Calu3 (cell line): ENCODE measurements at regions of chr5 and their contacts with region 1.

Region 1: GRCh38 chr5:127875235-127876021 is 172.2 kb downstream of the CCDC192 start:
- DNase-seq: peak; percentile 84
- H3K4me3 Mint-ChIP-seq: no peak overlapping the region
- H3K27ac Mint-ChIP-seq: no peak overlapping the region
- H3K4me1 Mint-ChIP-seq: peaks cover 18% of the 10 kb centered on the region
- H3K27me3 Mint-ChIP-seq: no peaks in the 10 kb centered on the region
- CTCF ChIP-seq: peak; percentile 42

Region 2: GRCh38 chr5:127564002-127564769 is 311.2 kb before region 1 on chr5:
- CTCF ChIA-PET with region 1: interaction called, 4 read pairs
- intact Hi-C with region 1: loop called (anchors 5 kb)
- DNase-seq: peak; percentile 73
- H3K4me3 Mint-ChIP-seq: no peak overlapping the region
- H3K27ac Mint-ChIP-seq: no peak overlapping the region
- H3K4me1 Mint-ChIP-seq: peaks cover 9% of the 10 kb centered on the region
- H3K27me3 Mint-ChIP-seq: peaks cover 8% of the 10 kb centered on the region
- CTCF ChIP-seq: peak; percentile 51

Region 3: GRCh38 chr5:127898551-127899213 is 23.3 kb after region 1 on chr5:
- CTCF ChIA-PET with region 1: interaction called, 11 read pairs
- intact Hi-C with region 1: no loop called
- DNase-seq: no peak
- H3K4me3 Mint-ChIP-seq: no peak overlapping the region
- H3K27ac Mint-ChIP-seq: no peak overlapping the region
- H3K4me1 Mint-ChIP-seq: peaks cover 9% of the 10 kb centered on the region
- H3K27me3 Mint-ChIP-seq: no peaks in the 10 kb centered on the region
- CTCF ChIP-seq: no peak

Region 4: DNA sequence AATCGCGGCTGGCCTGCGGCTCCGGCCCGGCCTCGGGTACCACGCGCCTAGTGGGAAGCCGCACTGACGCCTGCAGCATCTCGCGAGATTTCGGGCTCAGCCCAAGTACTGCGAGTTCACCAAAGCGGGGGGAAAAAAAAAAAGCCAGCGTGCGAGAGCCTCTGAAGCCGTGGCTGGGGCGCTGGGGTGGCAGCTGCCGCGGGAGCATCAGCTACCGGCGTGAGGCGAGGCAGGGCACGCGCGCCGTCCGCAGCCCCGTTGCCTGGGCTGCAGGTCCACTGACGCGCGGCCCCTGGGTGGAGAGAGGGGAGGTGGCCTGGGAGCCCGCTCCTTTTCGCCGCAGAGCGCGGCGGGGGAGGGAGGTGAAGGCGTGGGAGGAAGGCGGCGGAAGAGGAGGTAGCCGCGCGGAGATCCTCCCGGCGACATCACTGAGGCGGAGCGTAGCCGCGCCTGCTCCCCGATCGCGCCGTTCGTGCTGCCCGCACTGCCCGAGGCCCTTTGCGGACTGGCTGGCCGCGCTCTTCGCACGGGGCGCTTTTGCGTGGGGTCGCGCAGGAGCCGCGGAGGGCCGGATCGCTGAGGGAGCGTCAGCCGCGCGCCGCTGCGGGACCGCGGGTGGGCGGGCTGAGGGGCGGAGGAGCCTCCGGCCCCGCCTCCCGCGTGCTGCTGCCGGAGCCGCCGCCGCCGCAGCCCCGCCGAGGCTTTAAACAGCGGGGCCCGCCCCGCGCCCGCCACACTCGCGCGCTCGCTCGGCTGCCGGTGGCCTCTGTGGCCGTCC is 207.8 kb after region 1 on chr5 and contains the start of gene SLC12A2:
- CTCF ChIA-PET with region 1: interaction called, 9 read pairs
- intact Hi-C with region 1: loop called (anchors 2 kb)
- DNase-seq: peak; percentile 92
- H3K4me3 Mint-ChIP-seq: peak within 1 kb of the TSS; percentile 91
- H3K27ac Mint-ChIP-seq: peak within 1 kb of the TSS; percentile 87
- H3K4me1 Mint-ChIP-seq: peaks cover 51% of the 10 kb centered on the region
- H3K27me3 Mint-ChIP-seq: no peaks in the 10 kb centered on the region
- CTCF ChIP-seq: no peak
- total RNA-seq, gene SLC12A2: 393 and 576 TPM in 2 replicates

Region 5: DNA sequence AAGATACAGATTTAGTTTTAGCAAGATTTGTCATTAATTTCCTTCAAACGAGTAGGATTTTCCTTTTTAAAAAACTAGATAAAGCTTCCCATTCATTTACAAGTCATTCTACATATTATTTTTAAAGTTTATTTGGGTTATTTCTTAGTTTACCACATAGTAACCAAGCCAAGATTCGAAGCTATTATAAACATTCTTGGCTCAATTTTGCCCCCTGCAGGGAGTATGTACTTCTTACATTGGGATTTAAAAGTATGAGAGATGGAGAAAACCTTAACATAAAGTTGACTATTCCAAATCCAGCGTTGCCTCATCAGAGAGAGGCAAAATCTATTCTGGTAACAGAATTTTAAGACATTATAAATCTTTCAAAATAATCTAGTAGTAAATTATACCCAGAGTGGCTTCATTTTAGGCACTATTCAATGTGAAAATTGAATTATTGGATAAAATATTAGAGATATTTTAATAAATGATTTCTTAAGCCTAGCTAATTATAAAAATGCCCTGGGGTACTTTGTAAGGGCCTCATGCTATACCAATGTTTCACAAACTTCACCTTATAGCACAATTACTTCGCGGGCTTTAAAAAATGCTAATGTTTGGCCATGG is 623.5 kb after region 1 on chr5:
- CTCF ChIA-PET with region 1: no interaction called
- intact Hi-C with region 1: loop called (anchors 1 kb)
- DNase-seq: peak; percentile 50
- H3K4me3 Mint-ChIP-seq: no peak overlapping the region
- H3K27ac Mint-ChIP-seq: no peak overlapping the region
- H3K4me1 Mint-ChIP-seq: no peaks in the 10 kb centered on the region
- H3K27me3 Mint-ChIP-seq: no peaks in the 10 kb centered on the region
- CTCF ChIP-seq: peak; percentile 46